SK-N-SH (cell line): ENCODE measurements at regions of chr14 and their contacts with region 1.

Region 1: GRCh38 chr14:100285021-100285912 is 21.0 kb downstream of the SLC25A29 start:
- DNase-seq: peak; percentile 99
- H3K4me3 ChIP-seq: peak overlapping the region; percentile 63 to 67
- H3K27ac ChIP-seq: peak overlapping the region in 1 of 2 experiments; percentile 86; a peak in 1 of 4 replicates
- H3K4me1 ChIP-seq: peaks cover 0 to 27% of the 10 kb centered on the region in 2 experiments; a peak in 1 of 4 replicates
- H3K27me3 ChIP-seq: no peaks in the 10 kb centered on the region
- CTCF ChIP-seq: peak; percentile 80
- EP300 ChIP-seq: no peak
- RAD21 ChIP-seq: peak; percentile 34; the same call in 1 of the 2 replicates

Region 2: GRCh38 chr14:100239840-100240724 is 45.2 kb before region 1 on chr14:
- CTCF ChIA-PET with region 1: interaction called, 14 read pairs
- POLR2A ChIA-PET with region 1: no interaction called
- DNase-seq: peak; percentile 92
- H3K4me3 ChIP-seq: peak overlapping the region; percentile 92 to 94
- H3K27ac ChIP-seq: peak overlapping the region; percentile 83 to 87
- H3K4me1 ChIP-seq: peaks cover 7 to 14% of the 10 kb centered on the region in 2 experiments
- H3K27me3 ChIP-seq: no peaks in the 10 kb centered on the region
- CTCF ChIP-seq: peak; percentile 63
- EP300 ChIP-seq: no peak
- RAD21 ChIP-seq: 0 out of 2 replicates have a peak, but pooled peaks have one; percentile 1

Region 3: DNA sequence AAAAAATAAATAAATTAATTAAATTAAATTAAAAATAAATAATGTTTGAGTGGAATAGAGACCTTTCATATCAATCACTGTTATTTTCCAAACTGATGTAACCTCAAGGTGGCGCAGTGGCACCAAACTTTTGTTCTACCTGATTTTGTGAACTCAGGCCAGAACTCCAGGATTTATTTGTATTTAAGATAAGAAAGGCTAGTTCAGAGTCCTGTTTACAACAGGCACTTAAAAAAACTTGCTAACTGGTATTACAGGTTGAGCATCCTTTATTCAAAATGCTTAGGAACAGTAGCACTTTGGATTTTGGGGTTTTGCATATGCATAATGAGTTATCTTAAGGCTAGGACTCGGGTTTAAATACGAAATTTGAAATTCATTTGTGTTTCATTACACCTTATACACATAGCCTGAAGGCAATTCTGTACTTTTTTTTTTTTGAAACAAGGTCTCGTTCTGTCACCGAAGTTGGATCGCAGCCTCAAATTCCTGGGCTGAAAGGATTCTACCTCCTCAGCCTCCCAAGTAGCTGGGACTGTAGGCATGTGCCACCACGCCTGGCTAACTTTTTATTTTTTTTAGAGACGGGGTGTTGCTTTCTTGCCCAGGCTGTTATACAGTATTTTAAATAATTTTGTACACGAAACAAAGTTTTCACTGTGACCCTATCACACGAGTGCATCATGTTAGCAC is 13.9 kb before region 1 on chr14:
- CTCF ChIA-PET with region 1: interaction called, 58 read pairs
- POLR2A ChIA-PET with region 1: interaction called, 3 read pairs
- DNase-seq: no peak
- H3K4me3 ChIP-seq: no peak overlapping the region
- H3K27ac ChIP-seq: no peak overlapping the region
- H3K4me1 ChIP-seq: no peaks in the 10 kb centered on the region
- H3K27me3 ChIP-seq: no peaks in the 10 kb centered on the region
- CTCF ChIP-seq: peak; percentile 49
- EP300 ChIP-seq: no peak
- RAD21 ChIP-seq: peak; percentile 57

Region 4: DNA sequence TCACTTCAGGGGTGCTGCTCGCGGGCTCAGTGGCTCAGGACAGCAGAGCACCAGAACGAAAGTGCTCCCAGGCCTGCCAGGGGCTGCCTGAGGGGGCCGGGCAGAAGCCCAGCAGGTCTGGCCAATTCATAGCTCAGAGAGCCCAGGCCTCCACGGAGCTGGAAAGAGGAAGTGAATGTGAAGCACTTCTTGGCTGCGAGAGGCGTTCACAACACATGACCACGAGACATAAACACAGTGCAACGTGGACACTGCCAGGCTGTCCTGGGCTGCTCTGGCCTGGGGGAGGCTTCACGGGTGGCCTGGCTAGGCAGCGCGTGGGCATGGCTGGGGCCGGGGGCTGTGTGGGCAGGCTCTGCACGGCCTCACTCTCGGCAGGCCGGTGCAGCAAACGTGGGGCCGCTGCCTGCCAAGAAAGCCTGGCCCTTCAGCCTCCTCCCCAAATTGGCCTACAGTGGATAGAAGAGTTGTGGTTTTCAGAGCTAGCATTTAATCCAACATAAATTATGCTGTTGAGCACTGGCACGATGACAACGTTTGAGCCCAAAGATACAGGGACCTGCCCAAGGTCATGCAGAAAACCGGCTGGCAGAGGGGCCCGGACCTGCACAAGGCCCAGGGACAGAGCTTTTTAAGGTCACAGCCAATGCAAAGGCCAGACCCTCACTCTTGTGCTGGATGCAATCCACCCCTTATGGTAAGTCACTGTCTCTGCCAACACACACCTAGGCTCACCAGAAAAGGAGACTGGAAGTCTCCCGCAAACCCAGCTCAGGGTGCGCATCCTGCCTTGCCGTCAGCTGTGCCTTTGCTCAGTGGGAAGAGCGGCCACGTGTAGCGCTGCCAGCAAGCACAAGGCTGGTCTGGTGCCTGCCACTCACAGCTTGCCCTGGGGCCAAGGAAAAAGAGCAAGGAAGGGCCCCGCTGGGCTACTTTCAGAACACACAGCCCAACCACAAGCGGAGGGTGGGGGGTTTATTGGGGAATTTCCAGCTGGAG is 12.3 kb after region 1 on chr14:
- CTCF ChIA-PET with region 1: interaction called, 40 read pairs
- POLR2A ChIA-PET with region 1: no interaction called
- DNase-seq: peak; percentile 30
- H3K4me3 ChIP-seq: no peak overlapping the region
- H3K27ac ChIP-seq: no peak overlapping the region; a peak in 1 of 4 replicates
- H3K4me1 ChIP-seq: no peaks in the 10 kb centered on the region; a peak in 1 of 4 replicates
- H3K27me3 ChIP-seq: no peaks in the 10 kb centered on the region
- CTCF ChIP-seq: no peak
- EP300 ChIP-seq: no peak
- RAD21 ChIP-seq: no peak

Region 5: GRCh38 chr14:100306420-100307219 is 21.4 kb after region 1 on chr14 and contains the start of gene SLC25A29:
- CTCF ChIA-PET with region 1: interaction called, 31 read pairs
- POLR2A ChIA-PET with region 1: interaction called, 4 read pairs
- DNase-seq: peak; percentile 99
- H3K4me3 ChIP-seq: peak within 1 kb of the TSS; percentile 87 to 90
- H3K27ac ChIP-seq: peak within 1 kb of the TSS; percentile 51 to 81
- H3K4me1 ChIP-seq: peaks cover 0 to 28% of the 10 kb centered on the region in 2 experiments; a peak in 2 of 4 replicates
- H3K27me3 ChIP-seq: no peaks in the 10 kb centered on the region
- CTCF ChIP-seq: no peak
- EP300 ChIP-seq: no peak; a peak in 1 of 4 replicates
- RAD21 ChIP-seq: no peak
- polyA plus RNA-seq, gene SLC25A29: 66.9 and 84.6 TPM in 2 replicates

Region 6: DNA sequence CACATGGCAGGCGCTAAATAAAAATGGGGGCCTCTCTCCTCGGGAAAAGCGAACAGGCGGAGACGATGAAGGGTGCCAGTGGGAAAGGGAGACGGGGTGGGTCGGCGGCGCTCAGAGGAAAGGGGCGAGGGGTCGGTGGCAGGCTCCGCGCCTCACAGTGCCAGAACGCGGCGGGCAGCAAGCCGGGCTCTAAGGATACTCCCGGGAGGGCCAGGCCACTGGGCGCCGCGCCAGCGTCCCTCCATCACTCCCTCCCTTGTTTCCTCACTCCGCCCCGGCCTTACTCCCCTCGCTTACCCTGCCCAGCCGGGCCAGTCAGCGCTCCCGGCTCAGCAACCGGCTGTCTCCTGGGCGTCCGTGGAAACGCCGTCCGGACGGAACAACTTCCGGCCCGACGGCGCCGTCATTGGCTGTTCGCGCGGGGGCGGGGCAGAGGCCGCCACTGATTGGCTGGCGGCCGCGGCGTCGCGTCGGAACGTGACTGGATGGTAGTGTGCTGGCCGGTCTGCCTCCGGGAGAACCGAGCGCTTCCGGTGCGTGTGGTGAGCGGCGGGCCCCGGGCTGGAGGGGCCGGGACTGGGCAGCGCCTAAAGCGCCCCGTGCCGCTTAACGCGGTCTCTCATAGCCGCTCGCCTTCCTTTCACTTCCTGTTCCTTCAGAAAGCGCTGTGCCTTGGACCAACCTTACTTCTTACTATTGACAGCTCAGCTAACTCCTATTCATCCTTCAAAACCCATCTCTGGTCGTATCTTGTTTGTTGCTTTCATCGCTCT is 90.9 kb after region 1 on chr14:
- CTCF ChIA-PET with region 1: interaction called, 10 read pairs
- POLR2A ChIA-PET with region 1: interaction called, 4 read pairs
- DNase-seq: peak; percentile 95
- H3K4me3 ChIP-seq: peak within 1 kb of the TSS; percentile 70 to 93
- H3K27ac ChIP-seq: peak within 1 kb of the TSS; percentile 87 to 98
- H3K4me1 ChIP-seq: peaks cover 0 to 20% of the 10 kb centered on the region in 2 experiments; a peak in 1 of 4 replicates
- H3K27me3 ChIP-seq: no peaks in the 10 kb centered on the region
- CTCF ChIP-seq: no peak
- EP300 ChIP-seq: no peak; a peak in 1 of 4 replicates
- RAD21 ChIP-seq: no peak